ENCODE measurements at regions of chr7 and their contacts with region 1.

Region 1: GRCh38 chr7:47571331-47572093 is 10.4 kb downstream of the TNS3 start:
- DNase-seq: peak; percentile 81
- H3K4me3 Mint-ChIP-seq: peak overlapping the region; percentile 55
- H3K27ac Mint-ChIP-seq: peak overlapping the region; percentile 85
- H3K4me1 Mint-ChIP-seq: peaks cover 52% of the 10 kb centered on the region
- H3K27me3 Mint-ChIP-seq: no peaks in the 10 kb centered on the region
- CTCF ChIP-seq: no peak

Region 2: GRCh38 chr7:47453093-47454049 is 118.1 kb before region 1 on chr7:
- CTCF ChIA-PET with region 1: interaction called, 4 read pairs
- POLR2A ChIA-PET with region 1: interaction called, 3 read pairs
- intact Hi-C with region 1: loop called (anchors 5 kb)
- DNase-seq: peak; percentile 79
- H3K4me3 Mint-ChIP-seq: peak overlapping the region; percentile 9
- H3K27ac Mint-ChIP-seq: peak overlapping the region; percentile 77
- H3K4me1 Mint-ChIP-seq: peaks cover 44% of the 10 kb centered on the region
- H3K27me3 Mint-ChIP-seq: no peaks in the 10 kb centered on the region
- CTCF ChIP-seq: no peak

Region 3: GRCh38 chr7:47552621-47553020 is 18.9 kb before region 1 on chr7:
- CTCF ChIA-PET with region 1: interaction called, 3 read pairs
- POLR2A ChIA-PET with region 1: interaction called, 12 read pairs
- intact Hi-C with region 1: no loop called
- DNase-seq: peak; percentile 61
- H3K4me3 Mint-ChIP-seq: no peak overlapping the region
- H3K27ac Mint-ChIP-seq: peak overlapping the region; percentile 61
- H3K4me1 Mint-ChIP-seq: peaks cover 56% of the 10 kb centered on the region
- H3K27me3 Mint-ChIP-seq: no peaks in the 10 kb centered on the region
- CTCF ChIP-seq: no peak

Region 4: GRCh38 chr7:47581806-47582763 is 10.6 kb after region 1 on chr7 and contains the start of gene TNS3:
- CTCF ChIA-PET with region 1: interaction called, 8 read pairs
- POLR2A ChIA-PET with region 1: interaction called, 11 read pairs
- intact Hi-C with region 1: no loop called
- DNase-seq: no peak
- H3K4me3 Mint-ChIP-seq: peak within 1 kb of the TSS; percentile 94
- H3K27ac Mint-ChIP-seq: peak within 1 kb of the TSS; percentile 92
- H3K4me1 Mint-ChIP-seq: peaks cover 35% of the 10 kb centered on the region
- H3K27me3 Mint-ChIP-seq: no peaks in the 10 kb centered on the region
- CTCF ChIP-seq: peak; percentile 15
- total RNA-seq, gene TNS3: 30.1 and 33.3 TPM in 2 replicates

Measured in MCF 10A (cell line).